Endothelial cell of umbilical vein (primary cell): ENCODE measurements at regions of chr18 and their contacts with region 1.

Region 1: GRCh38 chr18:34122724-34123334 is 101.9 kb downstream of the NOL4 start:
- DNase-seq: peak; percentile 56
- H3K4me3 ChIP-seq: no peak overlapping the region
- H3K27ac ChIP-seq: no peak overlapping the region
- H3K4me1 ChIP-seq: no peaks in the 10 kb centered on the region
- H3K27me3 ChIP-seq: no peaks in the 10 kb centered on the region
- CTCF ChIP-seq: peak; percentile 68
- POLR2A ChIP-seq: no peak

Region 2: GRCh38 chr18:33231474-33232317 is 891.1 kb before region 1 on chr18:
- CTCF ChIA-PET with region 1: interaction called, 10 read pairs
- POLR2A ChIA-PET with region 1: no interaction called
- dilution Hi-C with region 1: no loop called
- intact Hi-C with region 1: no loop called
- DNase-seq: peak; percentile 71
- H3K4me3 ChIP-seq: no peak overlapping the region
- H3K27ac ChIP-seq: no peak overlapping the region
- H3K4me1 ChIP-seq: peaks cover 2% of the 10 kb centered on the region
- H3K27me3 ChIP-seq: peaks cover 0 to 2% of the 10 kb centered on the region in 2 experiments
- CTCF ChIP-seq: peak; percentile 82 to 86
- POLR2A ChIP-seq: no peak

Region 3: GRCh38 chr18:33470216-33470615 is 652.6 kb before region 1 on chr18:
- CTCF ChIA-PET with region 1: no interaction called
- POLR2A ChIA-PET with region 1: no interaction called
- dilution Hi-C with region 1: no loop called
- intact Hi-C with region 1: no loop called
- DNase-seq: no peak
- H3K4me3 ChIP-seq: no peak overlapping the region
- H3K27ac ChIP-seq: no peak overlapping the region
- H3K4me1 ChIP-seq: no peaks in the 10 kb centered on the region
- H3K27me3 ChIP-seq: no peaks in the 10 kb centered on the region
- CTCF ChIP-seq: no peak
- POLR2A ChIP-seq: no peak

Region 4: GRCh38 chr18:34048423-34048822 is 74.4 kb before region 1 on chr18:
- CTCF ChIA-PET with region 1: no interaction called
- POLR2A ChIA-PET with region 1: no interaction called
- dilution Hi-C with region 1: no loop called
- intact Hi-C with region 1: no loop called
- DNase-seq: no peak
- H3K4me3 ChIP-seq: no peak overlapping the region
- H3K27ac ChIP-seq: no peak overlapping the region
- H3K4me1 ChIP-seq: no peaks in the 10 kb centered on the region
- H3K27me3 ChIP-seq: no peaks in the 10 kb centered on the region
- CTCF ChIP-seq: no peak
- POLR2A ChIP-seq: no peak

Region 5: GRCh38 chr18:34108206-34108605 is 14.6 kb before region 1 on chr18:
- CTCF ChIA-PET with region 1: interaction called, 11 read pairs
- POLR2A ChIA-PET with region 1: no interaction called
- dilution Hi-C with region 1: no loop called
- intact Hi-C with region 1: no loop called
- DNase-seq: no peak
- H3K4me3 ChIP-seq: no peak overlapping the region
- H3K27ac ChIP-seq: no peak overlapping the region
- H3K4me1 ChIP-seq: no peaks in the 10 kb centered on the region
- H3K27me3 ChIP-seq: no peaks in the 10 kb centered on the region
- CTCF ChIP-seq: no peak
- POLR2A ChIP-seq: no peak

Region 6: GRCh38 chr18:34222307-34223163 is 99.7 kb after region 1 on chr18:
- CTCF ChIA-PET with region 1: interaction called, 15 read pairs
- POLR2A ChIA-PET with region 1: no interaction called
- dilution Hi-C with region 1: no loop called
- intact Hi-C with region 1: no loop called
- DNase-seq: peak; percentile 34
- H3K4me3 ChIP-seq: peak overlapping the region in 2 of 3 experiments; percentile 39 to 53
- H3K27ac ChIP-seq: no peak overlapping the region
- H3K4me1 ChIP-seq: peaks cover 9% of the 10 kb centered on the region
- H3K27me3 ChIP-seq: peaks cover 47 to 84% of the 10 kb centered on the region in 2 experiments
- CTCF ChIP-seq: no peak
- POLR2A ChIP-seq: no peak

Region 7: DNA sequence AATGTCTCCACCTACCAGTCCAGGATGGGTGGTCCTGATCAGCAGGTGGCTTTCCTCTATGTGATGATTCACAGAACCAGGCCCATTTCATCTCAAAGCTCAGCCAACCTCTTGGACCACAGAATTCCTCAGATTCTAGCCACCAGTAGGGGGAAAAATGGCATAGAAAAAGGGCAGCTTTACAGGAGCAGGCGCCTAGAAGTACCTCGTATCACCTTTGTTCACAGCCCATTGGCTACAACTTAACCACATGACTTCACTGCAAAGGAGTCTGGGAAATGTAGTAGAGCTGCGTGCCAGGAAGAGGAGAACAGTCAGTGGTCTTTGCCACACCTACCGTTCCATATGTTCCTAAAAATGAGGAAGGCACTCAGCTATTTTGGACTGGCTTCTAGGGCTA is 524.4 kb after region 1 on chr18:
- CTCF ChIA-PET with region 1: interaction called, 14 read pairs
- POLR2A ChIA-PET with region 1: no interaction called
- dilution Hi-C with region 1: no loop called
- intact Hi-C with region 1: no loop called
- DNase-seq: no peak
- H3K4me3 ChIP-seq: no peak overlapping the region
- H3K27ac ChIP-seq: no peak overlapping the region
- H3K4me1 ChIP-seq: no peaks in the 10 kb centered on the region
- H3K27me3 ChIP-seq: no peaks in the 10 kb centered on the region
- CTCF ChIP-seq: no peak
- POLR2A ChIP-seq: no peak

Region 8: GRCh38 chr18:34809451-34810072 is 686.7 kb after region 1 on chr18:
- CTCF ChIA-PET with region 1: interaction called, 24 read pairs
- POLR2A ChIA-PET with region 1: no interaction called
- dilution Hi-C with region 1: no loop called
- intact Hi-C with region 1: loop called (anchors 5 kb)
- DNase-seq: peak; percentile 31
- H3K4me3 ChIP-seq: no peak overlapping the region
- H3K27ac ChIP-seq: no peak overlapping the region
- H3K4me1 ChIP-seq: no peaks in the 10 kb centered on the region
- H3K27me3 ChIP-seq: no peaks in the 10 kb centered on the region
- CTCF ChIP-seq: peak; percentile 36 to 45
- POLR2A ChIP-seq: no peak